Stomach (tissue), 19 donors: ENCODE measurements at regions of chr9 and their contacts with region 1.

Region 1: DNA sequence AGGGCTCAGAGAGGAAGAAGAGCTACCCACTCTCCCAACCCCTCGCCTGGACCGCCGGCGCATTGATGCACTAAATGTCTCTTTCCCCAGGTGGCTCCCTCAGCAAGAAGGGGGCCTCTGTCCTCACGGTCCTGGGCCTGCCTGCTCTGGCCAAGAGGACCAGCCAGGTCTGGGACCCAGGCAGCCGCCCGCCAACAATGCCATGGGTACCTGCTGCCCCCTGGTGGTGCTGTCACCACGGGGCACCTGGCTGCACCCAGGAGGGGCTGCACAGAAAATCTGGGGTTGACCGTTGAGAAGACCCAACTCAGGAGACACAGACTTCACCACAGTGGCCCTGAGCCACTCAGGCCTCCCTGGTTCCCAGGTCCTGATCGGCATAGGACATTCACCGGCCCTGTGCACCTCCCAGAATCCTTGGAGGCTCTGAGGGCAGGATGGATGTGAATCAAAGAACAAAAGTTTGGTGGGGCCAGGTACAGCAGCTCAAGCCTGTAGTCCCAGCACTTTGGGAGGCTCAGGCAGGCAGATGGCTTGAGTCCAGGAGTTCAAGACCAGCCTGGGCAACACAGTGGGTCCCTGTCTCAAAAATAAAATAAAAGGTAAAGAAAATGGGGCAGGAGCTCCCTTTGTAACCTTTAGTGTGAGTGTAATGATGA is 2.4 kb upstream of the VAV2 start:
- DNase-seq: peak; percentile 83 to 91
- H3K4me3 ChIP-seq: no peak overlapping the region
- H3K27ac ChIP-seq: no peak overlapping the region
- H3K4me1 ChIP-seq: peaks cover 29 to 41% (median 38%) of the 10 kb centered on the region in 4 donors
- H3K27me3 ChIP-seq: peaks cover 0 to 34% (median 3%) of the 10 kb centered on the region in 3 donors
- CTCF ChIP-seq: peak in 6 of 7 experiments; percentile 45 to 99 (median 98)
- EP300 ChIP-seq: no peak
- POLR2A ChIP-seq: no peak

Region 2: GRCh38 chr9:133792721-133793470 is 201.6 kb before region 1 on chr9:
- intact Hi-C with region 1: loop called (anchors 5 kb)
- DNase-seq: peak; percentile 73 to 88
- H3K4me3 ChIP-seq: peak overlapping the region in 1 of 4 donors; percentile 26
- H3K27ac ChIP-seq: no peak overlapping the region
- H3K4me1 ChIP-seq: peaks cover 13 to 34% (median 32%) of the 10 kb centered on the region in 4 donors
- H3K27me3 ChIP-seq: no peaks in the 10 kb centered on the region
- CTCF ChIP-seq: peak in 6 of 7 experiments; percentile 67 to 98 (median 94)
- EP300 ChIP-seq: no peak
- POLR2A ChIP-seq: no peak